CD4-positive, alpha-beta T cell (primary cell): ENCODE measurements at regions of chr21 and their contacts with region 1.

Region 1: GRCh38 chr21:36209626-36210171 is 53.1 kb downstream of the DOP1B start:
- DNase-seq: peak; percentile 5 to 77 (median 37)
- ATAC-seq: peak; percentile 49
- H3K4me3 ChIP-seq: no peak overlapping the region
- H3K4me3 Mint-ChIP-seq: no peak overlapping the region
- H3K27ac ChIP-seq: no peak overlapping the region
- H3K27ac Mint-ChIP-seq: no peak overlapping the region
- H3K4me1 ChIP-seq: peaks cover 3% of the 10 kb centered on the region
- H3K4me1 Mint-ChIP-seq: peaks cover 9% of the 10 kb centered on the region
- H3K27me3 ChIP-seq: no peaks in the 10 kb centered on the region
- H3K27me3 Mint-ChIP-seq: no peaks in the 10 kb centered on the region
- CTCF ChIP-seq: peak; percentile 44

Region 2: GRCh38 chr21:36141513-36141925 is 68.2 kb before region 1 on chr21:
- CTCF ChIA-PET with region 1: interaction called, 15 read pairs
- POLR2A ChIA-PET with region 1: no interaction called
- intact Hi-C with region 1: loop called (anchors 1 kb)
- DNase-seq: peak; percentile 68 to 96 (median 82)
- ATAC-seq: peak; percentile 89
- H3K4me3 ChIP-seq: no peak overlapping the region
- H3K4me3 Mint-ChIP-seq: peak overlapping the region; percentile 0
- H3K27ac ChIP-seq: peak overlapping the region; percentile 19 to 38
- H3K27ac Mint-ChIP-seq: peak overlapping the region; percentile 66
- H3K4me1 ChIP-seq: peaks cover 33% of the 10 kb centered on the region
- H3K4me1 Mint-ChIP-seq: peaks cover 24% of the 10 kb centered on the region
- H3K27me3 ChIP-seq: no peaks in the 10 kb centered on the region
- H3K27me3 Mint-ChIP-seq: no peaks in the 10 kb centered on the region
- CTCF ChIP-seq: peak; percentile 84